Heart right ventricle (tissue), 16 donors: ENCODE measurements at regions of chr1 and their contacts with region 1.

Region 1: DNA sequence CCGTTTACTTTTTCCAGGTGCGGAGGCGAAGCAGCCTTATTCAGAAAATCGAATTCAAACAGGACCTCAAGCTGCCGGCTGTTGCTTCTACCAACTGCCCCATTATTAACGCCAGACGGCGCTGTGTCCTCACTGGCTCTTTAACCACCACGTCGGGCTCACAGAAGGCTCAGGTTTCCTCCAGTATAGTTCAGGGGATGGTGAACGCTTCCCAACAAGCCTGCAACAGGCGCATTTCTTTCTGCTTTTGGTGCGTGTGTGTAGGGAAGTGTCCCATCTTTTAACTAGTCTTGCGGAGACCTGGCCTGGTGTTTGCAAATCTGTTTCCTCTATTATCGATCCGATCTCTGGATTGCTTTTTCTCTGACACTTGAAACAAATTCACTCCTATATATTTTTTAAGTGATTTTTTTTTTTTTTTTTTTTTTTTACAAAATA is 791 bp upstream of the STUM start:
- DNase-seq: peak; percentile 75 to 82
- ATAC-seq: peak; percentile 69 to 83 (median 77)
- H3K4me3 ChIP-seq: peak overlapping the region in 9 of 10 donors; percentile 5 to 62 (median 55)
- H3K27ac ChIP-seq: peak overlapping the region in 1 of 10 donors; percentile 5
- H3K4me1 ChIP-seq: peaks cover 12 to 85% (median 40%) of the 10 kb centered on the region in 9 donors
- H3K27me3 ChIP-seq: peaks cover 0 to 45% (median 14%) of the 10 kb centered on the region in 7 donors
- CTCF ChIP-seq: peak; percentile 64 to 95 (median 85)

Region 2: GRCh38 chr1:226603022-226603857 is 55.5 kb after region 1 on chr1:
- intact Hi-C with region 1: loop called in 7 of 10 experiments (anchors 2 to 5 kb)
- DNase-seq: peak; percentile 51 to 83
- ATAC-seq: peak; percentile 24 to 75 (median 58)
- H3K4me3 ChIP-seq: peak overlapping the region in 5 of 10 donors; percentile 9 to 25 (median 15)
- H3K27ac ChIP-seq: peak overlapping the region; percentile 39 to 82 (median 72)
- H3K4me1 ChIP-seq: peaks cover 19 to 45% (median 34%) of the 10 kb centered on the region in 9 donors
- H3K27me3 ChIP-seq: no peaks in the 10 kb centered on the region
- CTCF ChIP-seq: no peak

Region 3: GRCh38 chr1:226608699-226609505 is 61.1 kb after region 1 on chr1:
- intact Hi-C with region 1: loop called in 7 of 10 experiments (anchors 2 to 5 kb)
- DNase-seq: peak; percentile 53 to 67
- ATAC-seq: peak in 5 of 8 donors; percentile 35 to 66 (median 62)
- H3K4me3 ChIP-seq: no peak overlapping the region
- H3K27ac ChIP-seq: no peak overlapping the region
- H3K4me1 ChIP-seq: peaks cover 7 to 49% (median 21%) of the 10 kb centered on the region in 9 donors
- H3K27me3 ChIP-seq: no peaks in the 10 kb centered on the region
- CTCF ChIP-seq: peak; percentile 76 to 89 (median 83)